Activated CD8-positive, alpha-beta T cell treated with anti-CD3 and anti-CD28 coated beads, Interleukin-2, amount 10 ng/mL, durations not matched to agents 7 days and 5 days (primary cell): ENCODE measurements at regions of chr12 and their contacts with region 1.

Region 1: DNA sequence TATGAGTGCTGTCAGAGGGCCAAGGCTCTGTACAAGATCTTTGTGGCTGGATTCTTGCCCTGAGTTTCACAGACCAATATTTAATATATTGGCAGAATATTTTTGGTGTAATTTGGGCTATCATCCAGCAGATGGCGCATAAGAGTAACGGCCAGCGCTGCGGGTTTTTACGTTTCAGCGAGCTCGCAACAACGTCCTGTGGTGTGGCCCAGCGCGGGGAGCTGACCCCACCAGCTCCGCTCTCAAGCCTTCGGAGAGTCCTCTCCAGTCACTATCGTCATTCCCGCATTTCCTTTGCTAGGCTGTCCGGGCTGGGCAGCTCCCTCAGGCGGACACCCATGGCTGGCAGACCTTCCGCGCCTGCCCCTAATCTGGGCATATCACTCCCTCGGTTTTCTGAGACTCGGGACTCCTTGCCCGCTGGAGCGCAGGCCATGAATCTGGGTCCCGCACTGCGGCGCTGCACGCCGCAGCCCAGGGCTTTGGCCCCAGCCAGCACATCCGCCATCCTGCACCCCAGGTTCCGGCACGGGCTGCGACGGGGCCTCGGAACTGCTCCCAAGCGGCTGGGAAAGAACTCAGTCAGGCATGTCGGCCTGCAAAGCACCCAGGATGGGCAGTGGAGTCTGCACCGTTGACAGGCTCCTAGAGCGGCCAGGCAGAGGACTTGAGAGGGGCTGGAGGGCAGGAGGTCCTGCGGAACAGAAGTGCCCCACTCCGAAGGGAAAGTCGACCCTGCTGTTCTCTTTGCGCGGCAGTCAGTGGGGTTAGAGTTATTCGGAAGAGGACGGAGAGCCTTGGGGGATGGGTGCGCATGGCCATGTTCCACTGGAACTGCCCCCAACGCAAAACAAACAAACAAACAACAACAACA is 18.4 kb downstream of the OLR1 start:
- DNase-seq: peak; percentile 73
- ATAC-seq: peak; percentile 83
- H3K4me3 Mint-ChIP-seq: peak overlapping the region; percentile 88
- H3K27ac Mint-ChIP-seq: peak overlapping the region; percentile 75
- H3K4me1 Mint-ChIP-seq: peaks cover 12% of the 10 kb centered on the region
- H3K27me3 Mint-ChIP-seq: peaks cover 12% of the 10 kb centered on the region

Region 2: GRCh38 chr12:10190558-10191388 is 37.3 kb after region 1 on chr12:
- CTCF ChIA-PET with region 1: interaction called, 34 read pairs
- POLR2A ChIA-PET with region 1: no interaction called
- DNase-seq: peak; percentile 71
- ATAC-seq: peak; percentile 99
- H3K4me3 Mint-ChIP-seq: no peak overlapping the region
- H3K27ac Mint-ChIP-seq: no peak overlapping the region
- H3K4me1 Mint-ChIP-seq: peaks cover 8% of the 10 kb centered on the region
- H3K27me3 Mint-ChIP-seq: peaks cover 28% of the 10 kb centered on the region